IMR-90 (cell line): ENCODE measurements at regions of chr11 and their contacts with region 1.

Region 1: GRCh38 chr11:74726547-74727182 is 4.6 kb downstream of the CHRDL2 start:
- DNase-seq: peak; percentile 85
- ATAC-seq: peak; percentile 78
- H3K4me3 ChIP-seq: no peak overlapping the region
- H3K27ac ChIP-seq: peak overlapping the region; percentile 61; the same call in 1 of the 2 replicates
- H3K4me1 ChIP-seq: peaks cover 28% of the 10 kb centered on the region
- H3K27me3 ChIP-seq: peaks cover 34% of the 10 kb centered on the region
- CTCF ChIP-seq: peak; percentile 97
- POLR2A ChIP-seq: peak; percentile 35; the same call in 1 of the 2 replicates
- RAD21 ChIP-seq: peak; percentile 97

Region 2: GRCh38 chr11:74449369-74449931 is 277.2 kb before region 1 on chr11:
- CTCF ChIA-PET with region 1: interaction called, 6 read pairs
- POLR2A ChIA-PET with region 1: no interaction called
- dilution Hi-C with region 1: no loop called
- in situ Hi-C with region 1: no loop called
- intact Hi-C with region 1: loop called (anchors 1 kb)
- DNase-seq: peak; percentile 81
- ATAC-seq: peak; percentile 88
- H3K4me3 ChIP-seq: no peak overlapping the region
- H3K27ac ChIP-seq: no peak overlapping the region
- H3K4me1 ChIP-seq: no peaks in the 10 kb centered on the region
- H3K27me3 ChIP-seq: peaks cover 8% of the 10 kb centered on the region
- CTCF ChIP-seq: peak; percentile 89
- POLR2A ChIP-seq: no peak
- RAD21 ChIP-seq: peak; percentile 94

Region 3: GRCh38 chr11:74592441-74593362 is 134.0 kb before region 1 on chr11 and contains the start of gene POLD3:
- CTCF ChIA-PET with region 1: no interaction called
- POLR2A ChIA-PET with region 1: no interaction called
- dilution Hi-C with region 1: no loop called
- in situ Hi-C with region 1: no loop called
- intact Hi-C with region 1: loop called (anchors 5 kb)
- DNase-seq: peak; percentile 81
- ATAC-seq: peak; percentile 99
- H3K4me3 ChIP-seq: peak within 1 kb of the TSS; percentile 65
- H3K27ac ChIP-seq: peak within 1 kb of the TSS; percentile 71
- H3K4me1 ChIP-seq: no peaks in the 10 kb centered on the region
- H3K27me3 ChIP-seq: no peaks in the 10 kb centered on the region; the same call in 1 of the 2 replicates
- CTCF ChIP-seq: no peak
- POLR2A ChIP-seq: peak; percentile 52
- RAD21 ChIP-seq: peak; percentile 8; the same call in 1 of the 2 replicates
- total RNA-seq, gene POLD3: 9.1 and 10.6 TPM in 2 replicates

Region 4: GRCh38 chr11:74634537-74634936 is 92.1 kb before region 1 on chr11:
- CTCF ChIA-PET with region 1: interaction called, 6 read pairs
- POLR2A ChIA-PET with region 1: no interaction called
- dilution Hi-C with region 1: no loop called
- in situ Hi-C with region 1: no loop called
- intact Hi-C with region 1: loop called (anchors 2 kb)
- DNase-seq: peak; percentile 66
- ATAC-seq: peak; percentile 28; the same call in 1 of the 2 replicates
- H3K4me3 ChIP-seq: no peak overlapping the region
- H3K27ac ChIP-seq: no peak overlapping the region
- H3K4me1 ChIP-seq: peaks cover 29% of the 10 kb centered on the region
- H3K27me3 ChIP-seq: no peaks in the 10 kb centered on the region
- CTCF ChIP-seq: peak; percentile 30
- POLR2A ChIP-seq: no peak
- RAD21 ChIP-seq: peak; percentile 35; the same call in 1 of the 2 replicates

Region 5: GRCh38 chr11:74672956-74673692 is 53.5 kb before region 1 on chr11:
- CTCF ChIA-PET with region 1: no interaction called
- POLR2A ChIA-PET with region 1: no interaction called
- dilution Hi-C with region 1: no loop called
- in situ Hi-C with region 1: no loop called
- intact Hi-C with region 1: loop called (anchors 1 kb)
- DNase-seq: peak; percentile 100
- ATAC-seq: peak; percentile 90
- H3K4me3 ChIP-seq: no peak overlapping the region
- H3K27ac ChIP-seq: peak overlapping the region; percentile 89
- H3K4me1 ChIP-seq: peaks cover 24% of the 10 kb centered on the region
- H3K27me3 ChIP-seq: no peaks in the 10 kb centered on the region
- CTCF ChIP-seq: no peak
- POLR2A ChIP-seq: peak; percentile 46
- RAD21 ChIP-seq: peak; percentile 23; the same call in 1 of the 2 replicates

Region 6: DNA sequence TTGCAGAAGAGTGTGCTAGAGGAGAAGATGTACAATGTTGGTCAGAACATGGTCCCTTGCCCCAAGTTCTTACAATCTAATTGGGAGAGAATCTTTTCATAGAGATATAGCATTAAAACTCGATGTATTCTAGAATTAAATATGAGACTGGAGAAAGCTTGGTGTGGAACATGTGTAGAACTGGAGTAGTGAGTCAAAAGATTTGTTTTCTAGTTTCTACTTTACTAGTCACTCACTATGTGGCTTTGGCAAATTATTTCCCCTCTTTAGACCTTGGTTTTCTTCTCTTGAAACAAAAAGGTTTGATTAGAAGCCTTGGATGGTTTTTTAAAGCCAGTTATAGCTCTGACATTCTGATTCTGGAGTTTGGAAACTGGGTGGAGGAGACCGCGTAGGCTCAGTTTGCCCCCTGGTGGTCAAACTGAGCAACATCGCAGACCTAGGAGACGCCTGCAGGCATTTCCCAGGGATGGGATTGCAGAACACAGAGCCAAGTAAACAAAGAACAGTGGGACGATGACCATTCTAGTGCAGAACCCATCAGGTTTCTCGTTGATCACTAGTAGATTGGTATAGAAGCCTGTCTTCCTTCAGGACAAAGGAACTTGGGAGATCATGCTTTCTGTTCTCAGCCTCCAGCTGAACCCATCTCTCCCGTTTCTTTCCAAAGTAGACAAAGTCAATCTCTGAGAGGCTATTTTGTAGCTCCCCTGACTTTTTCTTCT is 13.0 kb after region 1 on chr11:
- CTCF ChIA-PET with region 1: interaction called, 10 read pairs
- POLR2A ChIA-PET with region 1: no interaction called
- dilution Hi-C with region 1: no loop called
- in situ Hi-C with region 1: no loop called
- intact Hi-C with region 1: no loop called
- DNase-seq: peak; percentile 73
- ATAC-seq: peak; percentile 93
- H3K4me3 ChIP-seq: no peak overlapping the region
- H3K27ac ChIP-seq: no peak overlapping the region
- H3K4me1 ChIP-seq: peaks cover 8% of the 10 kb centered on the region
- H3K27me3 ChIP-seq: peaks cover 4% of the 10 kb centered on the region; the same call in 1 of the 2 replicates
- CTCF ChIP-seq: peak; percentile 91
- POLR2A ChIP-seq: no peak
- RAD21 ChIP-seq: peak; percentile 90